H1 (cell line): ENCODE measurements at regions of chr17 and their contacts with region 1.

Region 1: GRCh38 chr17:66481271-66481670 is 178.9 kb downstream of the PRKCA start:
- DNase-seq: no peak
- H3K4me3 ChIP-seq: no peak overlapping the region
- H3K27ac ChIP-seq: no peak overlapping the region
- H3K4me1 ChIP-seq: peaks cover 2 to 9% (median 5%) of the 10 kb centered on the region in 4 experiments; a peak in 5 of 7 replicates
- H3K27me3 ChIP-seq: no peaks in the 10 kb centered on the region
- CTCF ChIP-seq: no peak
- EP300 ChIP-seq: no peak
- POLR2A ChIP-seq: no peak
- RAD21 ChIP-seq: no peak

Region 2: DNA sequence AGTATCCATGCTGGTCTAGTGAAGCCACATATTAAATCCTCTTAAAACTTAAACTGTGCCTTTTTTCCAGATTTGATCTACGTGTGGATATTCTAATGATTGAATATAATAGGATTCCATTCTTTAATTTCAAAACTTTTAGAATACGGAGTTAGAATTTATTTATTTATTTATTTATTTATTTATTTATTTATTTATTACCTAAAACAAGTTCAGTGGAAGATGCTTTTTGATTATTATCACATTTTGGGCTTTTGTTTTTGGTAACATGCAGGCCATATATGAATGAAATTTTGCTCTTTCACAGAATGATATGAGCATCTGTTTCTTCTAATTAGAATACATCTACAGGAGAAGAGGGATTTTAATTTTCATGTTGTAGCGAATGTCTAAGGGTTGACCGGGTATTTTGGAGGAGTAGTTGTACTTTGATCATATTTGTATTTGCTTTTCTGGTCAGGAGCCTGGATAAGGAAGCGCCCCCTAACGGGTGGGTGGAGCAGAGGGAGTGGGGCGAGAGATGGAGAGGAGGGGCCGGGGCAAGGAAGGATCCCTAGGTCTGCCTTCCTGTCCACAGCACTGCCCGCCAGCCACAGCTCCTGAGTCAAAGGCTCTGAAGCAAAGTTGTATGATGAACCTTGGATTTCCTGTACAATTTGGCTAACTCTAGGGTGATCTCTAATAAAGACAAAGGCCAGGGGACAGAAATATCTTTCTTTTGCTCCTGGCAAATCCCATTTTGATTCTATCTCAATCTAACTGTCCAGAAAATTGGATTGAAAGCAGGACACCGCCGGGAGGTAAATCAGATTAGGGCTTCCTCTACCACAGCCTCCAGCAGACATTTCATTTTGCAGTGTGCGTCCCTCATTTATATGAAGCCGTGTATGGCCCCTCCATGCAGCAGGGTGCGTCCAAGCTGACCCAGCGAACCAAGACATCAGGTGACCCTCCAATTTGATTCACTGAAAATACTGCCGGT is 29.8 kb before region 1 on chr17:
- CTCF ChIA-PET with region 1: no interaction called
- POLR2A ChIA-PET with region 1: no interaction called
- DNase-seq: peak in 1 of 2 experiments; percentile 74
- H3K4me3 ChIP-seq: no peak overlapping the region
- H3K27ac ChIP-seq: no peak overlapping the region
- H3K4me1 ChIP-seq: peaks cover 11 to 19% (median 15%) of the 10 kb centered on the region in 4 experiments
- H3K27me3 ChIP-seq: no peaks in the 10 kb centered on the region
- CTCF ChIP-seq: peak; percentile 61 to 72 (median 65)
- EP300 ChIP-seq: no peak
- POLR2A ChIP-seq: no peak
- RAD21 ChIP-seq: peak; percentile 37 to 60; a peak in 3 of 4 replicates

Region 3: GRCh38 chr17:66493283-66493990 is 12.2 kb after region 1 on chr17:
- CTCF ChIA-PET with region 1: interaction called, 13 read pairs
- POLR2A ChIA-PET with region 1: interaction called, 3 read pairs
- DNase-seq: no peak
- H3K4me3 ChIP-seq: no peak overlapping the region
- H3K27ac ChIP-seq: no peak overlapping the region
- H3K4me1 ChIP-seq: peaks cover 2 to 17% (median 15%) of the 10 kb centered on the region in 4 experiments; a peak in 4 of 7 replicates
- H3K27me3 ChIP-seq: no peaks in the 10 kb centered on the region
- CTCF ChIP-seq: no peak
- EP300 ChIP-seq: no peak
- POLR2A ChIP-seq: no peak
- RAD21 ChIP-seq: no peak